PC-3 (cell line): ENCODE measurements at regions of chr13 and their contacts with region 1.

Region 1: DNA sequence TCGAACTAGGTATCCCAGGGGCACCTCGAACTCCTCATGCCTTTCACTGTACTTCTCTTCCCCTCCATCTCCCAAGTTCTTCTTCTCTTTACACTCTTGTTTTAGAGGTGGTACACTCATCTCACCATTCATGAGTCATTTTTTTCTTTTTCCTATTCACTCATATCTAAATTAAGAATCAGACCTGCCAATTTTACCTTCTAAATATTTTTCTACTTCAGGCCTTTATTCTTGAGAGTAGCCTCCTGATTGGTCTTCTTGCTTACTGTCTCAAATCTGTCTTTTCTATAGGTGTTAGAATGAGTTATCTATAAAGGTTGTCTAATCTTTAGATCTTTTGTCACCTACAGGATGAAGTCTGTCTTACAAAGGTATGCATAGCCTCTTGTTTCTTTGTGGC is 20.7 kb downstream of the TDRD3 start:
- DNase-seq: no peak
- ATAC-seq: no peak
- H3K4me3 ChIP-seq: no peak overlapping the region
- H3K27ac ChIP-seq: no peak overlapping the region
- H3K4me1 ChIP-seq: no peaks in the 10 kb centered on the region
- H3K27me3 ChIP-seq: no peaks in the 10 kb centered on the region
- CTCF ChIP-seq: no peak

Region 2: DNA sequence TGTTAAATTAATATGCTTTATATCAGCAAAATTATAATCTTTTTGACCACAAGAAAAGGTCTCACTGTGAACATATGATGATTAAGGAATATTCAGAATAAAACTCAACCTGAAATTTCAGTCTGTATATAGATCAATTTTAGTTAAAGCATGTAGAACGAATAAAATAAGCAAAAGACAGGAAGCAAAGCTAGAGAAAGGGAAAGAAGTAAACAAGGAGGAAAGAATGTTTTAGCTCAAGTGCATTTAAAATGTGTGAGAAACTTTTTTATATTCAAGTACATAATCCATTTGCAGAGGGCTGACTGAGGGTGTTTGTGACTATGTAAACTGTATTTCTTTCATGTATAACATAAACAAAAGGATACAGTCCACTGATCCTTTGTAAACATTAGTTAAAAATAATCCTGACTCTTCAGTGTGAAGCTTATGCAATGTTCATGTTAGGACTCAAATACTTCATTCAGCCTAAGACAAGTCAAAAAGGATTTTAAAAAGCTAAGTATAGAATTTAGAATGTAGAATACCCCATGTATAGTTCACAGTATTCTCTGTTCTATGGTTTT is 726.1 kb before region 1 on chr13:
- CTCF ChIA-PET with region 1: interaction called, 11 read pairs
- POLR2A ChIA-PET with region 1: no interaction called
- intact Hi-C with region 1: no loop called
- DNase-seq: no peak
- ATAC-seq: no peak
- H3K4me3 ChIP-seq: no peak overlapping the region
- H3K27ac ChIP-seq: no peak overlapping the region
- H3K4me1 ChIP-seq: no peaks in the 10 kb centered on the region
- H3K27me3 ChIP-seq: no peaks in the 10 kb centered on the region
- CTCF ChIP-seq: no peak

Region 3: DNA sequence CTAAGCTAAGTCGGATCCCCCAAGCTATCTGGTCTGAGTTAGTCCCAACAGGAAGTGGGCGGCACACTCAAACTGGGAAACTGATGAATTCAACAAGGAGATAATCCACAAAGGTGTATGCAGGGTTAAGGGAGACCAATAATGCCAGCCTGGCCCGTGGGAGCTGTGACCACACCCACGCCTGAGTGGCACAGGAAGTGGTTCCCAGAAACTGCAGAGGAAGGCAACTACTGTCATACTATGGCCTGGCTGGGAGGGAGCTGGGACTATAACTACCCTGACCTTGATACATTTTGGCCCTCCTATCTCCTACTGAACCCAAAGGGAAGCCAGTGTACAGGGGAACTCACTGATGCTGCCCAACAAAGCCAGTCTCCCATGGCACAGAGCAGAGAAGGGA is 106.2 kb before region 1 on chr13:
- CTCF ChIA-PET with region 1: no interaction called
- POLR2A ChIA-PET with region 1: no interaction called
- intact Hi-C with region 1: no loop called
- DNase-seq: no peak
- ATAC-seq: no peak
- H3K4me3 ChIP-seq: no peak overlapping the region
- H3K27ac ChIP-seq: no peak overlapping the region
- H3K4me1 ChIP-seq: no peaks in the 10 kb centered on the region
- H3K27me3 ChIP-seq: peaks cover 13% of the 10 kb centered on the region; the same call in 1 of the 2 replicates
- CTCF ChIP-seq: no peak

Region 4: DNA sequence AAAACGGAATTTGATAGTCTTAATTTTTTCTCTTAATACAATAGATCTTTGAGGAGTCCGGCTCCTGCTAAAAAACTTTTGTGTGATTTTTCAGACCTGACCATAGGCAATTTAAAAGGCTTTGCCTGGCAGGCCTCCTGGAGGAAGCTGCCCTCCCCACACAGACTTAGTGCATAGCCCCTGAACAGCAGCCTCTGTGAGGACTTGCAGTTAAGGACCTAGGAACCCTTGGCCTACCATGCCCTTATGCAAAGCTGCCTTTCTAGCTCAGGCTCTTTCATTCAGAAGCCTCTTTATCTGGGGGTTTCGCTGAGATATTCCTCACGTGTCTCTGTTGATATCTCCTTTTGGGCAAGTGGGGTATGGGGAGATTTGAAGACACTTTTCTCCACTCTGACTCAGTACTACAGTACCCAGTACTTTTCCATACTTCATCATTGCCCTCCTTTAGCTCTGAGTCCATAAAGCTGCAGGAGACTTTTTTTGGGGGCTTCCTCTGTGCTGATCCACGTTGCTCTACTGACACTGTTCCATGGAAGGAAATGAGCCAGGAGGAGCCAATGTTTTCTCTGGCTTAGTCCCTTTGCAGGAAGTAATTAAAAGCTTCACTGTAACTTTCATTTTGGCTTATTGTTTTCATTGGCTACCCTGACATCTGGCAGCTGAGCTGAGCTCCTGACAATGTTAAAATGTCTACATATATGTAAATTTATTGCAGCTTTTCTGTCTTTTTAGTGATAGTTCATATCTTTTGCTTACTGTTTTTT is 262.4 kb after region 1 on chr13:
- CTCF ChIA-PET with region 1: no interaction called
- POLR2A ChIA-PET with region 1: no interaction called
- intact Hi-C with region 1: no loop called
- DNase-seq: no peak
- ATAC-seq: no peak
- H3K4me3 ChIP-seq: no peak overlapping the region
- H3K27ac ChIP-seq: no peak overlapping the region
- H3K4me1 ChIP-seq: no peaks in the 10 kb centered on the region
- H3K27me3 ChIP-seq: no peaks in the 10 kb centered on the region
- CTCF ChIP-seq: no peak

Region 5: GRCh38 chr13:60811581-60811980 is 393.8 kb after region 1 on chr13:
- CTCF ChIA-PET with region 1: no interaction called
- POLR2A ChIA-PET with region 1: no interaction called
- intact Hi-C with region 1: no loop called
- DNase-seq: no peak
- ATAC-seq: no peak
- H3K4me3 ChIP-seq: no peak overlapping the region
- H3K27ac ChIP-seq: peak overlapping the region; percentile 55; the same call in 1 of the 2 replicates
- H3K4me1 ChIP-seq: peaks cover 21% of the 10 kb centered on the region
- H3K27me3 ChIP-seq: no peaks in the 10 kb centered on the region
- CTCF ChIP-seq: no peak